ENCODE measurements at regions of chr10 and their contacts with region 1.

Region 1: GRCh38 chr10:124389613-124390361 is 28.9 kb downstream of the OAT start:
- DNase-seq: no peak
- H3K4me3 ChIP-seq: no peak overlapping the region
- H3K27ac ChIP-seq: peak overlapping the region; percentile 21 to 29
- H3K4me1 ChIP-seq: peaks cover 0 to 4% of the 10 kb centered on the region in 2 donors
- H3K27me3 ChIP-seq: no peaks in the 10 kb centered on the region
- CTCF ChIP-seq: no peak
- POLR2A ChIP-seq: no peak

Region 2: DNA sequence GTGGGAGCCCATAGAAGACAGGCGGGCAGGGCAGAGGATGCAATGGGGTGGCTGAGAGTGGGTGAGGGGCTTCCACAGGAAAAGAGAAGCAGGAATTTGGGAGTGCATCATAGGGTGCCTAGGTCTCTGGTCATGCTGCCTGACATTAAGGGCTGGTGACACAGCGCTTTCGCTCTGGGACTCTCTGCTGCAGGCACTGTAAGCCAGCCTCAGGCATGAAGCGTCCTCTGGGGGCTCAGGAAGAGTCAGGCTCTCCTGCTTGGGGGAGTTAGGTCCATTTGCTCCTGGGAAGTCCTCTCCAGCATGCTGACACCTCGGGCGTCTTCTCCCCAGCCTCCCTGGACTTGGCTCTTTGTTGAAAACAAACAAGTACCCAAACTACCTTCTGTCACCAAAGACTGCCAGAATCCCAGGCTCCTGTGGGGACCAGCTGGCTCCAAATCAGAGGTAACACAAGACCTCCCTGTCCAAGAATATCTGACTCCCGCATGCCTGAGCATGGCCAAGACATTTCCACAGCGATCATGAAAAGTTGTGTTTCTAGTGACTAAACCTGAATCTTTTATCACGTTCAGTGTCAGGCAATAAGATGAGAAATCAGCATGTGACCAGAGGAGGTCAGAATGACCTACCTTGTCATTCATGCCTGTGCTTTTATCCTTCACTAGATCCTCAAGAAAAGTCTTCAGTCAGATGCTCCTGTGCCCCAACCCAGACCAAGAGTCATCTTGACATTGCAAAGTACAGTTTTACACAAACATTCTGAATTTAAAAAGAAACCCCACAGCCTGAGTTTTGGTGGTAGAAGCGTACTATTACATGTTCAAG is 668.1 kb before region 1 on chr10:
- intact Hi-C with region 1: no loop called
- DNase-seq: no peak
- H3K4me3 ChIP-seq: no peak overlapping the region
- H3K27ac ChIP-seq: no peak overlapping the region
- H3K4me1 ChIP-seq: no peaks in the 10 kb centered on the region
- H3K27me3 ChIP-seq: no peaks in the 10 kb centered on the region
- CTCF ChIP-seq: no peak
- POLR2A ChIP-seq: no peak

Region 3: DNA sequence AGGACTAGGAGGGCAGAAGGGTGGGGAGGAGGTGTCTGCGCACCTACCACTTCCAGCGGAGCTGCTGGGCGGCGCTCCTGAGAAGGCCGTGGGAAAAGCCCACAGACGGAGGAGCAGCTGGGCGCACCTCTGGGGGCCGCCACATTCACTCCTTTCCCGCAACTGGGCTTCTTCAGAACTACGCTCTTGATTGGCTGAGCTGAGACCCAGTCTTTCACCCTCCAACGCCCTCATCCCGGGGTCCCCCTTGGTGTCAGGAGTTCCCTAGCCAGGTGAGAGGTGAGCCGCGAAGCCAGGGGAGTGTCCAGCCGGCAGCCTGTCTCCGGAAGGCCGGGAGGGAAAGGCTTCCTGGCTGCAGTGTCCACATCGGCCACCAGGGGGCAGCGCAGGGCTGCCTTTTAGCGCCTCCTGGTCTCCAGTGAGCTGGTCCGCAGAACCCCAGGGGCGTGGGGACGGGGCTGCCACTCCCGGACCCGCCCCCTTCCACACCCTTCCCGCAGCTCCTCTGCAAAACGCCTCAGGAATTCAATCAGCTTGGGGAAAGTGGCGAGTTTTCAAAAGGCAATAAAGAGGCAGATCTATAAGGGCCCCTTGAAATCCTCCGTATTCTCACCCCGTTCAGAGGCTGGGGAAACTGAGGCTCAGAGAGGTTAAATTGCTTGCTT is 395.2 kb before region 1 on chr10:
- intact Hi-C with region 1: loop called (anchors 2 kb)
- DNase-seq: peak; percentile 83 to 90
- H3K4me3 ChIP-seq: peak overlapping the region in 1 of 2 donors; percentile 3
- H3K27ac ChIP-seq: no peak overlapping the region
- H3K4me1 ChIP-seq: peaks cover 0 to 8% of the 10 kb centered on the region in 2 donors
- H3K27me3 ChIP-seq: peaks cover 0 to 16% of the 10 kb centered on the region in 2 donors
- CTCF ChIP-seq: peak; percentile 96 to 99 (median 98)
- POLR2A ChIP-seq: peak in 1 of 2 donors; percentile 28

Region 4: DNA sequence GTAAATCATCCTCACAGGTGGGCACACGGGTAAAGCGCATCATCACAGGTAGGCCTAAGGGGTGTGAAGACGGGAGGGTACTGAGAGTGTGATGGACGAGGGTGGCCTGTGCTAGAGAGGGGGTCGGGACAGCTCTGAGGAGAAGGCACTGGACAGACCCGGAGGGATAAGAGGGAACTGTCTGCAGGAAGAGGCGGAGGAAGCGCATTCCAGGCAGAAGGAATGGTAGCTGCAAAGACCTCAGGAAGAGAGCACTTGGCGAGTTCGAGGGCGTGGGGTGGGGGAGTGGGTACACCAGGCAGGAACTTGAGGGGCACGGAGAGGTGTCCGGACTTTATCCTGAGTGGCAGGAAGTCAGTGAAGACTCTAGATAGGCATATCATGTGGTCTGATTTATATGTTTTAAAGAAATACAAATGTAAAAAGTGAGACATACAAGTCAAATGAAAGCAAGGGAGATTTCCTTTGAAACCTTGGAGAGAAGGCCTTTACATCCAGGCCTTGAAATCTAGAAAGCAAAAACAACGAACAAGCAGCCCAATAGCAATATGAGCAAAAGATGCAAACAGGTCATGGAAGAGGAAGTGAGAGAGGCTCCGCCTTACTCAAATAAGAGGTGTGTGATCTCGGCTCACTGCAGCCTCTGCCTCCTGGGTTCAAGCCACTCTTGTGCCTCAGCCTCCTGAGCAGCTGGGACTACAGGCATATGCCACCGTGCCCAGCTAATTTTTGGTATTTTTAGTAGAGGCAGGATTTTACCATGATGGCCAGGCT is 75.4 kb after region 1 on chr10:
- intact Hi-C with region 1: no loop called
- DNase-seq: no peak
- H3K4me3 ChIP-seq: no peak overlapping the region
- H3K27ac ChIP-seq: no peak overlapping the region
- H3K4me1 ChIP-seq: no peaks in the 10 kb centered on the region
- H3K27me3 ChIP-seq: no peaks in the 10 kb centered on the region
- CTCF ChIP-seq: no peak
- POLR2A ChIP-seq: no peak